B cell (primary cell): ENCODE measurements at regions of chr20 and their contacts with region 1.

Region 1: DNA sequence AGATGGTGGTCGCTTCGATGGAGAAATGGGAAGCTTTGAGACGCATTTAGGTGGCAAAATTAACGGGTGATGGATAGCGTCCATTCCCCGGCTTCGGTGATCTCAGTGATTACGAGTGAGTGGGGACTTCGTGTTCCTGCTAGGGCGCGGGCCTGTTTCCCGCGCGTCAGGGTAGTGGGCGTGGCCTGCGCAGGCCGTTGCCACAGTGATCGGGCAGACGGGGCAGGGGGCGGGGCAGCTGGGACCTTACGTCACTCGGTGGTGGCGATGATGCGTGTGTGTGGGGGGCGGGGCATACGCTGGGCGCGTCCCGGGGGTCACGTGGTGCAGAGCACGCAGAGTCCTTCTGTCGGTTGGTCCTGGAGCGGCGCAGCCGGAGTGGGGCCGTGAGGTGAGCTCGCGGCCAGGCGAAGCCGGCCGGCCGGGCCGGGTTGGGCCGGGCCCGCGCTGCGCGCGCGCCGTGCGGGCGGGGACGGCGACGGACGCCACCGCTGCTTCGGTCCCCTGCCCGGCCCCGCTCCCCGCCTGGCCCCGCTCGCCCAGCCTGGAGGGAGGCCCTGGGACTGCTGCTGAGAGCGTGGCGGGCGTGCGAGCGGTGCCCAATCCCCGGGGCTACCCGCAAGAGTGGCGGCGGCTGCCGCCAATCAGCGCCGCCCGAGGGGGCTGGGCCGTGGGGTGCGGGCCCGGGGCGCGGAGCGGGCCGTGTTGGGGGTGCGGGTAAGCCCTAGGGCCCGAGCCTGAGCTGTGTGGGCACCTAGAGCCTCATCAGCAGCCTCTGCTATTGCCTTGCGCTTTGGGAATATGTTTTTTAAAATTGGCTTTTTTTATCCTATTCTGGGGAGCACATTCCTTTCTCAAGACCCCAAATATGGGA is at the start of gene PHF20:
- DNase-seq: peak; percentile 100
- ATAC-seq: peak; percentile 80
- H3K4me3 ChIP-seq: peak within 1 kb of the TSS; percentile 67 to 98 (median 89)
- H3K4me3 Mint-ChIP-seq: peak within 1 kb of the TSS; percentile 88
- H3K27ac ChIP-seq: peak within 1 kb of the TSS; percentile 95 to 99
- H3K27ac Mint-ChIP-seq: peak within 1 kb of the TSS; percentile 99
- H3K4me1 ChIP-seq: peaks cover 80 to 88% of the 10 kb centered on the region in 2 donors
- H3K4me1 Mint-ChIP-seq: peaks cover 72% of the 10 kb centered on the region
- H3K27me3 ChIP-seq: no peaks in the 10 kb centered on the region
- H3K27me3 Mint-ChIP-seq: no peaks in the 10 kb centered on the region
- CTCF ChIP-seq: no peak
- total RNA-seq, gene PHF20: 92.3 and 101 TPM in 2 replicates

Region 2: GRCh38 chr20:35664544-35665221 is 107.2 kb before region 1 on chr20 and contains the starts of genes CPNE1 and RBM12:
- CTCF ChIA-PET with region 1: interaction called, 3 read pairs
- POLR2A ChIA-PET with region 1: interaction called, 4 read pairs
- intact Hi-C with region 1: loop called (anchors 1 kb)
- DNase-seq: peak; percentile 96
- ATAC-seq: peak; percentile 77
- H3K4me3 ChIP-seq: peak within 1 kb of the TSS; percentile 76 to 98 (median 90)
- H3K4me3 Mint-ChIP-seq: peak within 1 kb of the TSS; percentile 92
- H3K27ac ChIP-seq: peak within 1 kb of the TSS; percentile 96 to 97
- H3K27ac Mint-ChIP-seq: peak within 1 kb of the TSS; percentile 100
- H3K4me1 ChIP-seq: peaks cover 39 to 42% of the 10 kb centered on the region in 2 donors
- H3K4me1 Mint-ChIP-seq: peaks cover 48% of the 10 kb centered on the region
- H3K27me3 ChIP-seq: no peaks in the 10 kb centered on the region
- H3K27me3 Mint-ChIP-seq: no peaks in the 10 kb centered on the region
- CTCF ChIP-seq: no peak
- total RNA-seq, gene CPNE1: 323 and 331 TPM in 2 replicates
- total RNA-seq, gene RBM12: 144 and 145 TPM in 2 replicates

Region 3: GRCh38 chr20:35699127-35699975 is 72.6 kb before region 1 on chr20 and contains the starts of genes NFS1 and ROMO1:
- CTCF ChIA-PET with region 1: no interaction called
- POLR2A ChIA-PET with region 1: interaction called, 6 read pairs
- intact Hi-C with region 1: loop called (anchors 2 kb)
- DNase-seq: peak; percentile 92
- ATAC-seq: peak; percentile 88
- H3K4me3 ChIP-seq: peak within 1 kb of the TSS; percentile 69 to 98 (median 91)
- H3K4me3 Mint-ChIP-seq: peak within 1 kb of the TSS; percentile 85
- H3K27ac ChIP-seq: peak within 1 kb of the TSS; percentile 84 to 96
- H3K27ac Mint-ChIP-seq: peak within 1 kb of the TSS; percentile 97
- H3K4me1 ChIP-seq: peaks cover 17 to 23% of the 10 kb centered on the region in 2 donors
- H3K4me1 Mint-ChIP-seq: peaks cover 33% of the 10 kb centered on the region
- H3K27me3 ChIP-seq: no peaks in the 10 kb centered on the region
- H3K27me3 Mint-ChIP-seq: no peaks in the 10 kb centered on the region
- CTCF ChIP-seq: peak; percentile 31
- total RNA-seq, gene NFS1: 29.0 and 29.4 TPM in 2 replicates
- total RNA-seq, gene ROMO1: 33.2 and 38.1 TPM in 2 replicates

Region 4: DNA sequence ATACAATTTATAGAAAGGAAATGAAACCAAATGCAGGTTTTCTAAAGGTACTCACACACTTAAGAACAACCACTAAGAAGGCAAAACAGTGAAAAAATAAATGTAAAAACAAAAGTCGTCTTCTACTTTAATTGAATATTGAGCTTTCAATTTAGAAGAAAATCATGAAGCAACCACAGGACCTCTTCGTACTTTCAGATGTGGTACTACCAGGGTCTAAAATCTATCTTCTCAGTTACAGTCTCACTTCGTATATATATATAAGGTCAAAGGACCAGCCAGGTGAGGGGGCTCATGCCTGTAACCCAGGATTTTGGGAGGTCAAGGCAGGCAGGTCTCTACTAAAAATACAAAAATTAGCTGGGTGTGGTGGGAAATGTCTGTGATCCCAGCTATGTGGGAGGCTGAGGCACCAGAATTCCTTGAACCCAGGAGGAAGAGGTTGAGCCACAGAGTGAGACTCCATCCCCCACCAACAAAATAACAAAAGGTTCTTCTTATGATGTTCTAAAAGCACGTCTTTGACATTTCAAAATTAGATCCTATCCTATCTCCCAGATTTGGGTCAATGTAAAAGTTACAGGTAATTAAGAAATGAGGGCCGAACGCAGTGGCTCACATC is 60.2 kb before region 1 on chr20:
- CTCF ChIA-PET with region 1: no interaction called
- POLR2A ChIA-PET with region 1: no interaction called
- intact Hi-C with region 1: no loop called
- DNase-seq: no peak
- ATAC-seq: no peak
- H3K4me3 ChIP-seq: no peak overlapping the region
- H3K4me3 Mint-ChIP-seq: no peak overlapping the region
- H3K27ac ChIP-seq: no peak overlapping the region
- H3K27ac Mint-ChIP-seq: no peak overlapping the region
- H3K4me1 ChIP-seq: peaks cover 0 to 5% of the 10 kb centered on the region in 2 donors
- H3K4me1 Mint-ChIP-seq: peaks cover 33% of the 10 kb centered on the region
- H3K27me3 ChIP-seq: no peaks in the 10 kb centered on the region
- H3K27me3 Mint-ChIP-seq: no peaks in the 10 kb centered on the region
- CTCF ChIP-seq: no peak

Region 5: DNA sequence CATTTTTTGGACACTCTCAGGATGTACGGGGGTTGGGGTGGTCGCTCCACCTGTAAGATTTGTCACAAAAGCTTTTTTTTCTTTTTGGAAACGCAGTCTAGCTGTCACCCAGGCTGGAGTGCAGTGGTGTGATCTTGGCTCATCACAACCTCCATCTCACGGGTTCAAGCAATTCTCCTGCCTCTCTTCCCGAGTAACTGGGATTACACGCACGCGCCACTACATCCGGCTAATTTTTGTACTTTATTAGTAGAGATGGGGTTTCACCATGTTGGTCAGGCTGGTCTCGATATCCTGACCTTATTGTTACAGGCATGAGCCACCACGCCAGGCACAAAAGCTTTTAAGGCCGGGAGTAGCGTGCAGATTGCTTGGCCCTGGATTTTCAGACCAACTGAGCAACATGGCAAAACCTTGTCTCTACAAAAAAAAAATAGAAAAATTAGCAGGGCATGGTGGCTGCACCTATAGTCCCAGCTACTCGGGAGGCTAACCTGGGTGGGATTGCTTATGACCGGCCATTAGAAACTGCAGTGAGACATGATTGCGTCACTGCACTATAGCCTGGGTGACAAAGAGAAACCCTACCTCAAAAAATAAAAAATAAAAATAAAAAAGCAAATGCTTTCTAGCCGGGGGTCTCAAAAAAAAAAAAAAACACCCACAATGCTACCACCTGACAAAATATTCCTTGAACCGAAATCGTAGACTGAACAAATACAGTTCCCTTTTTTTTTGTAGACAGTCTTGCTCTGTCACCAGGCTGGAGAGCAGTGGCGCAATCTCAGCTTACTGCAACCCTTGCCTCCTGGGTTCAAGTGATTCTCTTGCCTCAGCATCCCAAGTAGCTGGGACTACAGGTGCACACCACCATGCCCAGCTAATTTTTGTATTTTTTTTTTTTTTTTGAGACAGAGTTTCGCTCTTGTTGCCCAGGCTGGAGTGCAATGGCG is 44.9 kb before region 1 on chr20:
- CTCF ChIA-PET with region 1: no interaction called
- POLR2A ChIA-PET with region 1: interaction called, 4 read pairs
- intact Hi-C with region 1: loop called (anchors 10 kb)
- DNase-seq: no peak
- ATAC-seq: no peak
- H3K4me3 ChIP-seq: no peak overlapping the region
- H3K4me3 Mint-ChIP-seq: no peak overlapping the region
- H3K27ac ChIP-seq: no peak overlapping the region
- H3K27ac Mint-ChIP-seq: no peak overlapping the region
- H3K4me1 ChIP-seq: no peaks in the 10 kb centered on the region
- H3K4me1 Mint-ChIP-seq: peaks cover 12% of the 10 kb centered on the region
- H3K27me3 ChIP-seq: no peaks in the 10 kb centered on the region
- H3K27me3 Mint-ChIP-seq: no peaks in the 10 kb centered on the region
- CTCF ChIP-seq: no peak